Gastrocnemius medialis (tissue), 4 donors: ENCODE measurements at regions of chr20 and their contacts with region 1.

Region 1: DNA sequence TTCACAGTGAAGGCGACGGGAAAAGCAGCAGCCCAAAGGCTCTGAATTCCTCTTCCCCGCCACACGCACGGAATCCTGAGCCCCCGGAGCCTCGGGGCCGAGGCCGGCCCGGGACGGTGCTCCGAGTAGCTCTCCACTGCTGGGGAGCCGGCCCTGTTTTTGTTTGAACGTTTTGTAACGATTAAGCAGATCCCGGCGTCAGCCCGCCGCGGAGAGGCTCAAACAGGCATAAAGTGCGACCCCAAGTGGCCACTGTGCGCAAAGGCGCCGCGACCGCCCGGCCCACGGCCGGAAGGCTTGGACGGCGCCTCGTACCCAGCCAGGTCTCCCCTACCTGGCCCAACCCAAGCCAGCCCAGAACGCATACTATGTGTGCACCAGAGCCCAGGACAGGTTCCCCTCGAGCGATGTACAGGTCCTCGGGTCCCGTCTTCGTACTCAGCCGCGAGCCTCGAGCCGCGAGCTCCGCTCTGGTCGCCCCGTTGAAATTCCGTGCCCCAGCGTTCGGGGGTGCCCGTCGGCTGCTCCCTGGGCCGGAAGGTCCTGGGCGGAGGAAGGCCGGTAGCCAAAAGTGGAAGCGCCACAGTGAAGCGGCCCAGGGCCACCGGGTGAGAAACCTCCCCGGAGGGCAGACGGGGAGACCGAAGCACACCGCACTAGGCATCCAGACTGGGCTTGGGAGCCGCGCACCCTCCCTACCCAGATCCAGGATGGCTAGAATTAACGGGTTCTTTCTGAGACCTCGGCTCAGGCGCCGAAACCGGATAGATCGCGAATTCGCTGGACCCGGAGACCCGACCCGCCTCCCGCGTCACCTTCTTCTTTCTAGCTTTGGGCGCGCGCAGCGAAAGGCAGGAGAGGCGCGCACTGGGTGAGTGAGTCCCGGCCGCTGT is 1.2 kb upstream of the MAFB start:
- DNase-seq: peak; percentile 83 to 86
- ATAC-seq: peak; percentile 62 to 64
- H3K4me3 ChIP-seq: peak overlapping the region; percentile 62 to 74 (median 70)
- H3K27ac ChIP-seq: peak overlapping the region; percentile 91 to 99 (median 96)
- H3K4me1 ChIP-seq: peaks cover 18 to 20% of the 10 kb centered on the region in 2 donors
- H3K27me3 ChIP-seq: peaks cover 12 to 25% (median 24%) of the 10 kb centered on the region in 3 donors
- CTCF ChIP-seq: peak; percentile 89 to 98 (median 95)
- POLR2A ChIP-seq: no peak

Region 2: GRCh38 chr20:39885975-39886649 is 804.1 kb before region 1 on chr20:
- in situ Hi-C with region 1: loop called in 3 of 4 experiments (anchors 10 to 25 kb)
- intact Hi-C with region 1: loop called (anchors 2 kb)
- DNase-seq: peak; percentile 33 to 70
- ATAC-seq: peak; percentile 63 to 82
- H3K4me3 ChIP-seq: no peak overlapping the region
- H3K27ac ChIP-seq: no peak overlapping the region
- H3K4me1 ChIP-seq: no peaks in the 10 kb centered on the region
- H3K27me3 ChIP-seq: no peaks in the 10 kb centered on the region
- CTCF ChIP-seq: peak in 4 of 5 experiments; percentile 57 to 69 (median 63)
- POLR2A ChIP-seq: no peak

Region 3: GRCh38 chr20:40160097-40160550 is 530.1 kb before region 1 on chr20:
- in situ Hi-C with region 1: loop called in 2 of 4 experiments (anchors 10 to 25 kb)
- intact Hi-C with region 1: loop called (anchors 5 kb)
- DNase-seq: peak in 1 of 2 donors; percentile 33
- ATAC-seq: peak; percentile 52 to 53
- H3K4me3 ChIP-seq: no peak overlapping the region
- H3K27ac ChIP-seq: no peak overlapping the region
- H3K4me1 ChIP-seq: no peaks in the 10 kb centered on the region
- H3K27me3 ChIP-seq: no peaks in the 10 kb centered on the region
- CTCF ChIP-seq: peak; percentile 22 to 59 (median 36)
- POLR2A ChIP-seq: no peak

Region 4: GRCh38 chr20:40279390-40279789 is 410.8 kb before region 1 on chr20:
- in situ Hi-C with region 1: loop called in 3 of 4 experiments (anchors 25 kb)
- intact Hi-C with region 1: no loop called
- DNase-seq: peak; percentile 52 to 53
- ATAC-seq: peak; percentile 88 to 93
- H3K4me3 ChIP-seq: no peak overlapping the region
- H3K27ac ChIP-seq: peak overlapping the region in 3 of 4 donors; percentile 32 to 53 (median 50)
- H3K4me1 ChIP-seq: peaks cover 0 to 24% of the 10 kb centered on the region in 2 donors
- H3K27me3 ChIP-seq: no peaks in the 10 kb centered on the region
- CTCF ChIP-seq: no peak
- POLR2A ChIP-seq: no peak

Region 5: DNA sequence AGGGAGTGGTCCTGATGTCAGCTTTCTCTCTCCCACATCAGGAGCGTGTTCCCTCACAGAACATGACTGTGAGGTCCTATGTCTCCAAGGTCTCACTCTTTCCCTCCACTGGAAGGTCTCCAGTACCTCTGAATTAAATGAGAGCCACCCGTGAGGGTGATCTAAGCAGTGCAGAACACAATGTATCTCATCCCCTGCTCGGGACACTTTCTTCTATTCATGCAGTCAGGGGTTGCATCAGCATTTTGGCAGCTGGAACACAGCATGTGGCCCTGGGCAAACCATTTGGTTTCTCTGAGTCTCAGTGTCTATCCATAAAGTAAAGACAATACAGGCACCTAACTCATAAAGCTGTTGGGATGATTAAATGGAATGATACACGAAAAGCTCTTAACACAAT is 35.3 kb before region 1 on chr20:
- in situ Hi-C with region 1: no loop called
- intact Hi-C with region 1: loop called (anchors 2 kb)
- DNase-seq: peak; percentile 91
- ATAC-seq: peak; percentile 97
- H3K4me3 ChIP-seq: no peak overlapping the region
- H3K27ac ChIP-seq: peak overlapping the region; percentile 73 to 89 (median 80)
- H3K4me1 ChIP-seq: peaks cover 14 to 30% of the 10 kb centered on the region in 2 donors
- H3K27me3 ChIP-seq: no peaks in the 10 kb centered on the region
- CTCF ChIP-seq: no peak
- POLR2A ChIP-seq: peak; percentile 30 to 57